SK-N-SH (cell line): ENCODE measurements at regions of chr7 and their contacts with region 1.

Region 1: GRCh38 chr7:5677538-5678294 is 103.7 kb downstream of the RNF216 start:
- DNase-seq: peak; percentile 80
- H3K4me3 ChIP-seq: peak overlapping the region in 1 of 2 experiments; percentile 8; a peak in 2 of 4 replicates
- H3K27ac ChIP-seq: peak overlapping the region; percentile 13 to 45; a peak in 3 of 4 replicates
- H3K4me1 ChIP-seq: peaks cover 16 to 23% of the 10 kb centered on the region in 2 experiments
- H3K27me3 ChIP-seq: no peaks in the 10 kb centered on the region
- CTCF ChIP-seq: peak; percentile 97
- EP300 ChIP-seq: no peak
- RAD21 ChIP-seq: peak; percentile 94

Region 2: DNA sequence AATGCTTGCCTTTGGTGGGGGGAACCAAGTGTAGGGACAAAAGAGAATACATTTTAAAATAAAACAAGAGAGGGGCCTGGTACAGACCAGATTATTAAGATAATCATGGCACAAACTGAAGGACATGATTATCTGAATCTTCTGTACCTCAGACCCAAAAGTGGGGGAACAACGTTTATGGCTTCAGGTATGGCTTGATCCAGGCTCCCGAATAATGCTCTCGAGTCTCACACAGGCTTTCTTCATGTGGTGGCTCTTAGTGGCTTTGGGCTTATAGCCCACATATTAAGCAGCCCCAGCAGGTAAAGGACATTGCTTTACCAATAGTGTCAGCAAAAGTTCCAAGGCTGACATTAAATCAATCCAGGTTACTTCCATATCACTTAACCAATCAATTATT is 1102.5 kb before region 1 on chr7:
- CTCF ChIA-PET with region 1: no interaction called
- POLR2A ChIA-PET with region 1: no interaction called
- DNase-seq: no peak
- H3K4me3 ChIP-seq: no peak overlapping the region
- H3K27ac ChIP-seq: no peak overlapping the region
- H3K4me1 ChIP-seq: no peaks in the 10 kb centered on the region
- H3K27me3 ChIP-seq: no peaks in the 10 kb centered on the region
- CTCF ChIP-seq: no peak
- EP300 ChIP-seq: no peak
- RAD21 ChIP-seq: no peak

Region 3: GRCh38 chr7:5507013-5507412 is 170.7 kb before region 1 on chr7:
- CTCF ChIA-PET with region 1: interaction called, 11 read pairs
- POLR2A ChIA-PET with region 1: no interaction called
- DNase-seq: peak; percentile 32
- H3K4me3 ChIP-seq: no peak overlapping the region
- H3K27ac ChIP-seq: no peak overlapping the region
- H3K4me1 ChIP-seq: peaks cover 0 to 10% of the 10 kb centered on the region in 2 experiments; a peak in 2 of 4 replicates
- H3K27me3 ChIP-seq: no peaks in the 10 kb centered on the region
- CTCF ChIP-seq: no peak
- EP300 ChIP-seq: no peak
- RAD21 ChIP-seq: no peak

Region 4: GRCh38 chr7:5607951-5608656 is 69.6 kb before region 1 on chr7:
- CTCF ChIA-PET with region 1: interaction called, 11 read pairs
- POLR2A ChIA-PET with region 1: no interaction called
- DNase-seq: peak; percentile 53
- H3K4me3 ChIP-seq: no peak overlapping the region
- H3K27ac ChIP-seq: peak overlapping the region in 1 of 2 experiments; percentile 22; a peak in 1 of 4 replicates
- H3K4me1 ChIP-seq: no peaks in the 10 kb centered on the region; a peak in 1 of 4 replicates
- H3K27me3 ChIP-seq: no peaks in the 10 kb centered on the region
- CTCF ChIP-seq: no peak
- EP300 ChIP-seq: no peak
- RAD21 ChIP-seq: no peak

Region 5: GRCh38 chr7:5694912-5695726 is 17.4 kb after region 1 on chr7:
- CTCF ChIA-PET with region 1: interaction called, 168 read pairs
- POLR2A ChIA-PET with region 1: interaction called, 5 read pairs
- DNase-seq: no peak
- H3K4me3 ChIP-seq: peak overlapping the region in 1 of 2 experiments; percentile 16; a peak in 1 of 4 replicates
- H3K27ac ChIP-seq: peak overlapping the region; percentile 95 to 99
- H3K4me1 ChIP-seq: peaks cover 49 to 80% of the 10 kb centered on the region in 2 experiments
- H3K27me3 ChIP-seq: no peaks in the 10 kb centered on the region
- CTCF ChIP-seq: no peak
- EP300 ChIP-seq: peak in 1 of 2 experiments; percentile 88; a peak in 2 of 4 replicates
- RAD21 ChIP-seq: no peak

Region 6: GRCh38 chr7:5704534-5704922 is 26.8 kb after region 1 on chr7:
- CTCF ChIA-PET with region 1: interaction called, 168 read pairs
- POLR2A ChIA-PET with region 1: no interaction called
- DNase-seq: peak; percentile 75
- H3K4me3 ChIP-seq: no peak overlapping the region
- H3K27ac ChIP-seq: peak overlapping the region; percentile 6 to 7; a peak in 3 of 4 replicates
- H3K4me1 ChIP-seq: peaks cover 9 to 13% of the 10 kb centered on the region in 2 experiments; a peak in 3 of 4 replicates
- H3K27me3 ChIP-seq: no peaks in the 10 kb centered on the region
- CTCF ChIP-seq: peak; percentile 99
- EP300 ChIP-seq: no peak
- RAD21 ChIP-seq: peak; percentile 98